ENCODE measurements at regions of chr17 and their contacts with region 1.

Region 1: DNA sequence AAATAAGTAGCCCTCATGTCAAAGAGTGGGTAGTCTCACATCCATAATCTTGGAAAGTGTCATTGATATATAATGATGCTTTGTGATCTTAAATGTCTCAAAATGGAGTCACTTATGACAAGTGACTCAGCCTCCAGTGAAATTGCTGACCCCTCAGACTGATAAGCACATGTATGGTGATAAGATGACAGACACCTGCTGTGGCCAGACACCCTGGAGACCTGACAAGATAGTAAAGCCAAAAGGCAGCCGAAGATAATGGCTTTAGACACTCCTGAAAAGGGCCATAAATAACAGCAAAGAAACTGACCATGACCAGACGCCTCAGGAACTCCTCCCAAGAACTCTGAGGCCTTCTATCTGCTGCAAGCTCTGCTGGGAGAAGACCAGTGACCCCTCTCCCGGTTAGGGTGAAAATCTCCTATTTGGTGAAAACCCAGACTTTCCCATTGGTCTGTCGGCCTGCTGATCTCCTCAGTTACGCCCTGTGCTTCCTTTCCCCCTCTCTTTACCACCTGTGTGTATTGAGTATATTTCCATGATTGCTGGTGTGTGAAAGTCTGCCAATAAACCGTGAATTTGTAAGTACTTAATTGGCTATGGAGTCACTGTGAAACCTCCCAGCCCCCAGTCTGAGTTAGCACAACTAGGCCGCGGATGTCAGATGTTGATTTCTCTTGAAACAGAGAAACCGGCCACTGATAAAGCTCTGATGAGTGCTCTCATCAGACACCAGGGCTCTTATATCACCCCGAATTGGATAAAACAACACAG is 226.7 kb upstream of the MYOCD start:
- DNase-seq: no peak
- H3K4me3 ChIP-seq: no peak overlapping the region
- H3K4me3 Mint-ChIP-seq: no peak overlapping the region
- H3K27ac ChIP-seq: no peak overlapping the region
- H3K27ac Mint-ChIP-seq: no peak overlapping the region
- H3K4me1 ChIP-seq: no peaks in the 10 kb centered on the region
- H3K4me1 Mint-ChIP-seq: no peaks in the 10 kb centered on the region
- H3K27me3 ChIP-seq: no peaks in the 10 kb centered on the region
- H3K27me3 Mint-ChIP-seq: peaks cover 0 to 1% (median 0%) of the 10 kb centered on the region in 3 donors
- CTCF ChIP-seq: no peak

Region 2: DNA sequence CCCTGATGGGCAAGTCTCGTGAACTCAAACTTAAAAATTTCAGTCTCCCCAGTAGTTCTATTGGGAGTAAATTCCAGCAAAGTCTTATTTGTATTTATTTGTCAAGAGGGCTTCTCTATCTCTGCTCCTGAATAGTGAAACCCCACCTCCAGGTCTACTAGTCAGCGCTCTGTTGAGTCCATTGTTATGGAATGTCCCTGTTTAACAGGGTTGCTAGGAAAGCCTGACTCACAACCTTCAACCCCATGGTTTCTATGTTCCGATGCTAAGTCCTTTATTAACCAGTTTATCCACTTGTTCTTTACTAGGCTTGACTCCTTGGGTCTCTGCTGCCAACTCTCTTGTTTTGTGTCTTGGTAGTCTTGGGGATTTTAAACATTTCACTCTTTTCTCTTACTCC is 24.0 kb before region 1 on chr17:
- intact Hi-C with region 1: no loop called
- DNase-seq: no peak
- H3K4me3 ChIP-seq: no peak overlapping the region
- H3K4me3 Mint-ChIP-seq: no peak overlapping the region
- H3K27ac ChIP-seq: no peak overlapping the region
- H3K27ac Mint-ChIP-seq: no peak overlapping the region
- H3K4me1 ChIP-seq: no peaks in the 10 kb centered on the region
- H3K4me1 Mint-ChIP-seq: no peaks in the 10 kb centered on the region
- H3K27me3 ChIP-seq: no peaks in the 10 kb centered on the region
- H3K27me3 Mint-ChIP-seq: peaks cover 0 to 2% (median 0%) of the 10 kb centered on the region in 3 donors
- CTCF ChIP-seq: no peak

Region 3: GRCh38 chr17:12485361-12485906 is 46.4 kb after region 1 on chr17:
- intact Hi-C with region 1: loop called in 1 of 2 experiments (anchors 5 kb)
- DNase-seq: no peak
- H3K4me3 ChIP-seq: no peak overlapping the region
- H3K4me3 Mint-ChIP-seq: no peak overlapping the region
- H3K27ac ChIP-seq: no peak overlapping the region
- H3K27ac Mint-ChIP-seq: no peak overlapping the region
- H3K4me1 ChIP-seq: no peaks in the 10 kb centered on the region
- H3K4me1 Mint-ChIP-seq: no peaks in the 10 kb centered on the region
- H3K27me3 ChIP-seq: no peaks in the 10 kb centered on the region
- H3K27me3 Mint-ChIP-seq: no peaks in the 10 kb centered on the region
- CTCF ChIP-seq: no peak

Measured in CD14-positive monocyte (primary cell).